Ovary (tissue), 10 donors: ENCODE measurements at regions of chr21 and their contacts with region 1.

Region 1: DNA sequence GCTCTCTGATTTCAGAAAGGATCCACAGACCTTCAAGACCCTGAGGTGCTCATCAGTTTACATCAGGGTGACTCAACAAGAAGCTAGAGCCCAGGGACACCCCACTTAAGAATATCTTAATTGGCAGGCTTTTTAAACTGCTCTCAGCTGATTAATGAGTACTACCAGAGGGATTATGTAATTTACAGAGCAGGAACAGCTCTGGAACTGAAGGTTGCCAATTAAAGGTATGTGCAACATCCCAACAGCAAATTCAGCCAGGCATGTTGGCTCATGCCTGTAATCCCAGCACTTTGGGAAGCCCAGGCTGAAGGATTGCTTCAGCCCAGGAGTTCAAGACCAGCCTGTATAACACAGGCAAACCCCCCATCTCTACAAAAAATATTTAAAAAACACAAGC is 295.7 kb downstream of the SETD4 start:
- DNase-seq: no peak
- H3K4me3 ChIP-seq: no peak overlapping the region
- H3K27ac ChIP-seq: no peak overlapping the region
- H3K4me1 ChIP-seq: no peaks in the 10 kb centered on the region
- H3K27me3 ChIP-seq: no peaks in the 10 kb centered on the region
- CTCF ChIP-seq: no peak
- EP300 ChIP-seq: no peak
- POLR2A ChIP-seq: no peak

Region 2: GRCh38 chr21:35940074-35940927 is 175.7 kb after region 1 on chr21:
- intact Hi-C with region 1: loop called in 1 of 4 experiments (anchors 5 kb)
- DNase-seq: peak; percentile 24 to 45 (median 38)
- H3K4me3 ChIP-seq: no peak overlapping the region
- H3K27ac ChIP-seq: no peak overlapping the region
- H3K4me1 ChIP-seq: no peaks in the 10 kb centered on the region
- H3K27me3 ChIP-seq: no peaks in the 10 kb centered on the region
- CTCF ChIP-seq: peak in 2 of 3 donors; percentile 35 to 67
- EP300 ChIP-seq: no peak
- POLR2A ChIP-seq: no peak